Body of pancreas (tissue), 4 donors: ENCODE measurements at regions of chr15 and their contacts with region 1.

Region 1: DNA sequence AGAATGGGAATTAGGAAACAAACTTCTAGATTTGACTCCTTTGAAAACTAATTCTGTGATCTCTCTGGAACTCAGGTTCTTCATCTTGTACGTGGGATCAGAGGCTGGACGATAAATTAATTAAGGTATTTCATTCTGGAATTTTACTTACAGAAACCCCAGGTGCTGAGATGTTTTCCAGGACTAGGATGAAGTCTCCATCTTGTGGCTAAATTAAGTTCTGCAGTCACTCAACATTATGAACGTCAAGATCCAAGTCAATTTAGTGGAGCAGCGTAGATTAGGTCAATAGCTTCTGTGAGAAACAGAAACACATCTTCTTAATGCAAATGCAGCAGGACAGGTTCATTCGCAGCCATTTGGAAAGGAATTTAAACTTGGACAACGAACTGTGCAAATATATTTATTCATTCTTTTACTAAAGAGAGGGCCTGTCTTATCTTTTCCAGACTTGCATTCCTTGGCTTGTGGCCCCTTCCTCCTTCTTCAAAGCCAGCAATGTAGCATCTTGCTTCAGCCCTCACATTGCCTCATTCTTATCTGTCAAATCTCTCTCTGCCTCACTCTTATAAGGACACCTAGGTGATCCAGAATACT is 26.7 kb upstream of the TMC3 start:
- DNase-seq: peak in 1 of 4 donors; percentile 14
- ATAC-seq: peak; percentile 52
- H3K4me3 ChIP-seq: no peak overlapping the region
- H3K27ac ChIP-seq: no peak overlapping the region
- H3K4me1 ChIP-seq: no peaks in the 10 kb centered on the region
- H3K27me3 ChIP-seq: no peaks in the 10 kb centered on the region
- CTCF ChIP-seq: peak; percentile 60 to 85 (median 79)
- POLR2A ChIP-seq: no peak

Region 2: GRCh38 chr15:81274931-81275707 is 125.6 kb before region 1 on chr15:
- intact Hi-C with region 1: loop called (anchors 5 kb)
- DNase-seq: peak; percentile 73 to 81 (median 76)
- ATAC-seq: peak; percentile 88
- H3K4me3 ChIP-seq: no peak overlapping the region
- H3K27ac ChIP-seq: peak overlapping the region in 3 of 4 donors; percentile 10 to 38 (median 31)
- H3K4me1 ChIP-seq: peaks cover 22% of the 10 kb centered on the region
- H3K27me3 ChIP-seq: no peaks in the 10 kb centered on the region
- CTCF ChIP-seq: peak; percentile 76 to 94 (median 92)
- POLR2A ChIP-seq: no peak

Region 3: DNA sequence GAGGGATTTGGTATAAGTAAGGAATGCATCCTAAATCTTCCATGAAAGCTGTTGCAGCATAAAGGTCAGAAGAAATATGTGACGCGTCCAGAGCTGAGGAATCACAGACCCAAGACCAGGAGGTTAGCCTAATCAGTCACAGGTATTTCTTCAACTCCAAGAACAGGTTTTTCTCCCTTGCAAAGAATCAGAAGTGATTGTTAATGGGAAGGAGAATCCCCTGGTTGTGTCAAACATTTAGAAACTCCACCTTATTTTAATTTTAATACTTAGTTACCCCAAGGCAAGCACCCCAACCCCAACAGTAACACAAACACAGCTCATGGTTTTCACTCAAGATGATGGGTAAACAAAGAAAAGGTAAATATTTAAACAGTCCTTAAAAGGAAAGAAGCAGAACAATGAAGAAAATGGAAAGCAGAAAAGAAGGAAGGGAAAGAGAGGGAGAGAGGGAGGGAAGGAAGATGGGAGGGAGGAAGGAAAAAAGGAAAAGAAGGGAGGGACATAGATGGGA is 392.0 kb after region 1 on chr15:
- intact Hi-C with region 1: no loop called
- DNase-seq: no peak
- ATAC-seq: no peak
- H3K4me3 ChIP-seq: no peak overlapping the region
- H3K27ac ChIP-seq: no peak overlapping the region
- H3K4me1 ChIP-seq: no peaks in the 10 kb centered on the region
- H3K27me3 ChIP-seq: no peaks in the 10 kb centered on the region
- CTCF ChIP-seq: no peak
- POLR2A ChIP-seq: no peak